ENCODE measurements at regions of chrX and their contacts with region 1.

Region 1: GRCh38 chrX:16826207-16826606 is 39.9 kb downstream of the TXLNG start:
- DNase-seq: no peak
- H3K4me3 Mint-ChIP-seq: no peak overlapping the region
- H3K27ac Mint-ChIP-seq: peak overlapping the region; percentile 24
- H3K4me1 Mint-ChIP-seq: peaks cover 20% of the 10 kb centered on the region
- H3K27me3 Mint-ChIP-seq: no peaks in the 10 kb centered on the region

Region 2: DNA sequence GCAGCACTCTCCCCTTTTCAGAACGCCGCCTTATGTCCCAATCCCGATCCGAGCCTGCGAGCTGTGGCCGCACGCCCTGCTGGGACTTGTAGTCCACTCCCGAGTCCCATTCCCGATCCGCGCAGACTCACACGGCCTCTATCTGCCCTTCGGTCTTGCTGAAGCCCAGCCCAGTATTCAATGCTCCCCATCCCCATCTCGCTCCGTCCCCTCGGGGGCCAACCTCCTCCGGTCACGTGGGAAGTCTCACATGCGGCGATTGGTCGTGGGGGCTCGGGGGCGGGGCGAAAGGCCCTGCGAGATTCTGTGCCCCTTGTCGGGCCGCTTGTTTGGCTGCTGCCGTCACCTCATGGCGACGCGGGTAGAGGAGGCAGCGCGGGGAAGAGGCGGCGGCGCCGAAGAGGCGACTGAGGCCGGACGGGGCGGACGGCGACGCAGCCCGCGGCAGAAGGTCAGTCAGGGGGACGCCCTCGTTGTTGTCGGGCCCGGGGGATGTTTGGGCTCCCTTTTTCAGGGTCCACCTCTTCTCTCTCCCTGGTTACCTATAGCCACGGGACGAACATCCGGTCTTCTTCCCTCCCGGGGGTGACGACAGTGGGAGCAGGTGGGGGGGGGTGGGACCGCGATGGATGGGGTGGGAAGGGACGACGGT is 39.9 kb before region 1 on chrX and contains the start of gene TXLNG:
- CTCF ChIA-PET with region 1: no interaction called
- intact Hi-C with region 1: loop called (anchors 1 kb)
- DNase-seq: peak; percentile 95
- H3K4me3 Mint-ChIP-seq: peak within 1 kb of the TSS; percentile 83
- H3K27ac Mint-ChIP-seq: peak within 1 kb of the TSS; percentile 72
- H3K4me1 Mint-ChIP-seq: peaks cover 9% of the 10 kb centered on the region
- H3K27me3 Mint-ChIP-seq: no peaks in the 10 kb centered on the region
- total RNA-seq, gene TXLNG: 11.8 to 12.3 TPM

Region 3: GRCh38 chrX:16870095-16870860 is 44.1 kb after region 1 on chrX and contains the start of gene RBBP7:
- CTCF ChIA-PET with region 1: interaction called, 3 read pairs
- intact Hi-C with region 1: loop called (anchors 5 kb)
- DNase-seq: peak; percentile 91
- H3K4me3 Mint-ChIP-seq: peak within 1 kb of the TSS; percentile 96
- H3K27ac Mint-ChIP-seq: peak within 1 kb of the TSS; percentile 98
- H3K4me1 Mint-ChIP-seq: peaks cover 25% of the 10 kb centered on the region
- H3K27me3 Mint-ChIP-seq: no peaks in the 10 kb centered on the region
- total RNA-seq, gene RBBP7: 213 to 228 TPM

Region 4: DNA sequence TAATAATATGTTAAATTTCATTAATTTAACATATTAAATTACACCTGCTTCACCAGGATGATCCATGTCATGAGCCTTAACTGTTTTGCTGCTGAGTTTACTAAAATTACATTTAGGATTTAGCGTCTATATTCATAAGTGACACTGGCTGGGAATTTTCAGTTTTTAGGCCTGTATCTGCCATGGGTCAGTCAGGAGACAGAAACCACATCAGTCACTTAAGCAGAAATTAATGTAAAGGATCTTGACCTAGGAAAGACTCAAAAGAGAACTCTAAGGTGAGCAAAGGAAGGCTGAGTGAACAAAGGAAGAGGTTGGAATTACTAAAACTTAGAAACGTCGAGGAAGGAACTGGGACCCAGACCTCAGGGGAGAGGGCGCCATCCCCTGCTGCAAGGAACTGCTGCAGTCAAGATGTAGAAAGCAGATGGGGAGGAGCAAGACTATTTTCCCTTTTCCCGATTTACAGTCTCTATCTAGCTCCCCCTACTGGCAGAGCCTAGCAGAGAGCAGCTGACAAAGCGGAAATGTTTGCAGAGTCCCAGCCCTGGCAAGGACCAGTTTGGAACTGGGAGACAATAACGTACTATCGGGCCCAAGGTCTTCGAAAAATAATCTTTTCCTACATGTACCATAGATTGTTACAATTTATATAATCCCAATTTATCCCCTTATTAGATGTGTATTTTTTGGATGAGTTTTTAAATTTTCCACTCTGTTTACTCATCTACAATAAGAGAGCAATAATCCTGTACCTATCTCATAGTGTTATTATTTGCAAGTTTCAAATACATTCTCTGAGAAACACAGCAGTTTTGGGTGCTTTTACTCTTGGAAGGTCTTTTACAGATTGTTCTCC is 66.5 kb after region 1 on chrX:
- CTCF ChIA-PET with region 1: interaction called, 5 read pairs
- intact Hi-C with region 1: loop called (anchors 1 kb)
- DNase-seq: peak; percentile 76
- H3K4me3 Mint-ChIP-seq: no peak overlapping the region
- H3K27ac Mint-ChIP-seq: peak overlapping the region; percentile 46
- H3K4me1 Mint-ChIP-seq: peaks cover 18% of the 10 kb centered on the region
- H3K27me3 Mint-ChIP-seq: no peaks in the 10 kb centered on the region

Region 5: DNA sequence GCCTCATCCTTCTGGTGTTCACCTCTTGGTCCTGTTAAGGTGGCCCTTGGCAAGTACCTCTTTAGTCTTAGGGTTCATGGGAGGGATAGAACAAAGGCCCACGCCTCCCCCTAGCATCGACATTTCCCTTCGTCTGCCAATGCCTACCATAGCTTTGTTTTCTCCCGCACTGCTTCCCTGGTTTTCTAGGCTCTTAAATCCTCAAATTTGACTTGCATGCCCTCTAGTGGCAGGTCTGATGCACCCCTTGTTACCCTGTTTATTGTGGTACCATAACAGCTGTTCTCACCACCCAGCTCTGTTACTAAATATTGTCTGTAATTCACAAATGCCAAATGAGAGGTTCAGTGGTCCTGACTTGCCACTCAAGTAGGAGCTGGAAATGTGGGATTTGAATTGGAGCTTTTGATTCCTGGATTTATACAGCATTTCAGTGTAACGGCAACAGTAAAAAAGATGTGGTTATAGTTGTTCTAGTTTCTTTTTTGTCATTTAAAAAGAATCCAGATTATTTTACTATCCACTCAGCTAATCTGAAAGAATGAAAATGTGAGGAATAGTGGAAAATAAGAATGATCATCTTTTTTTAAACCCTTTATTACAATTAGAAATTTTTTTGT is 220.4 kb after region 1 on chrX:
- CTCF ChIA-PET with region 1: interaction called, 6 read pairs
- intact Hi-C with region 1: loop called (anchors 1 kb)
- DNase-seq: peak; percentile 67
- H3K4me3 Mint-ChIP-seq: no peak overlapping the region
- H3K27ac Mint-ChIP-seq: no peak overlapping the region
- H3K4me1 Mint-ChIP-seq: no peaks in the 10 kb centered on the region
- H3K27me3 Mint-ChIP-seq: no peaks in the 10 kb centered on the region